ENCODE measurements at regions of chr2 and their contacts with region 1.

Region 1: GRCh38 chr2:183530333-183530901 is 406.2 kb downstream of the NUP35 start:
- DNase-seq: no peak
- H3K4me3 ChIP-seq: no peak overlapping the region
- H3K27ac ChIP-seq: no peak overlapping the region
- H3K4me1 ChIP-seq: no peaks in the 10 kb centered on the region
- H3K27me3 ChIP-seq: no peaks in the 10 kb centered on the region
- CTCF ChIP-seq: no peak
- POLR2A ChIP-seq: no peak

Region 2: DNA sequence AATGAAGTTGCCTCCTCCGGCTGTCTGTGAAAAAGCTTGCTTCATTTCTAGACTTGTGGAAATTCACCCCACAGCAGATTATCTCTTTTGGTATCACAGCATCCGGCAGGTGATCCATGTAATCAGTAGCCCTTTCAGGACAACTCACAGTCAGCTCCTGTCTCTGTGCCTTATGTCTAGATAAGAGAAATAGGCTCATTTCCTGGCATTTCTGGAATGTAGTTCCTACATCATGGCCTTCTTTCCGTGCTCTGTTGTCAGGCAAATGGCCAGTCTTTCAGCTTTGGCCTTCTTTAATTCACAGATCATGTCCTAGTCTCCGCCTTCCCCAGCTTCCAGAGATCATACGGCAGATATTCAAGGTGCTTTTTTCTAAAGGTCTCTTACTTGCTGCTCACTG is 49.3 kb after region 1 on chr2:
- CTCF ChIA-PET with region 1: no interaction called
- POLR2A ChIA-PET with region 1: no interaction called
- dilution Hi-C with region 1: no loop called
- intact Hi-C with region 1: no loop called
- DNase-seq: no peak
- H3K4me3 ChIP-seq: no peak overlapping the region
- H3K27ac ChIP-seq: no peak overlapping the region
- H3K4me1 ChIP-seq: no peaks in the 10 kb centered on the region
- H3K27me3 ChIP-seq: no peaks in the 10 kb centered on the region
- CTCF ChIP-seq: no peak
- POLR2A ChIP-seq: no peak

Region 3: GRCh38 chr2:185433824-185434223 is 1903.4 kb after region 1 on chr2:
- CTCF ChIA-PET with region 1: no interaction called
- POLR2A ChIA-PET with region 1: no interaction called
- dilution Hi-C with region 1: no loop called
- intact Hi-C with region 1: loop called (anchors 5 kb)
- DNase-seq: no peak
- H3K4me3 ChIP-seq: no peak overlapping the region
- H3K27ac ChIP-seq: no peak overlapping the region
- H3K4me1 ChIP-seq: no peaks in the 10 kb centered on the region
- H3K27me3 ChIP-seq: no peaks in the 10 kb centered on the region
- CTCF ChIP-seq: no peak
- POLR2A ChIP-seq: no peak

Measured in endothelial cell of umbilical vein (primary cell).